ENCODE measurements at regions of chr14 and their contacts with region 1.

Region 1: GRCh38 chr14:104657101-104657524 is 32.3 kb upstream of the INF2 start:
- DNase-seq: no peak

Region 2: DNA sequence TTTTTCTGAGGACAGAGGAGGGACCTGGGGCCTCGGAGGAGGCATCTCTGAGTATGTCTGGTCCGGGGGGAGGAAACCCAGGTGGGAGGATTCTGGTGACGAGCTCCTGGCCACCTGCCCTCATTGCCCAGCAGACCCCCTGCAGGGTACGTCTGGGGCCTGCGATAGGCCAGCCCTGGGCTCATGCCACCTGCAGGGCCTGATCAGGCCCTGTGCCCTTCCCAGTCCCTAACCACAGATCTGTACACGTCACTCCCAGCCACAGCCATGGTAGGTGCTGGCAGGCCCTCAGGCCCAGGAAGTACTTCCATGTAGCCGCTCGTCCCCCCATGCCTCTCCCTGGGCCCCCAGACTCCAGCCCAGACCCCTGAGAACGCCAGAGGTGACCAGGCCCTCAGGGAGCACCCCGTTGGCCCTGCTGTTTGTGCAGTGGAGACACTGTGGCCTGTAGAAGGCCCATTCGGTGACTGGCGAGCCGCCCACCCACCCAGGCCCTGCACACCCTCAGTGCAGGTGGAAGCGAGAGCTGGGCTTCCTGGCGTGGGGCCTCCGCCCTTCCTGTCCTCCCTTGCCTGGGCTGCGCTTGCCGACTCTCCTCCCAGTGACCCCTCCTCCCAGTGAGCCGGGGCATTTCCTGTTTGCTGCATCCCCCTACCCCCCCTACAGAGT is 38.0 kb after region 1 on chr14:
- intact Hi-C with region 1: loop called (anchors 5 kb)
- DNase-seq: no peak

Region 3: DNA sequence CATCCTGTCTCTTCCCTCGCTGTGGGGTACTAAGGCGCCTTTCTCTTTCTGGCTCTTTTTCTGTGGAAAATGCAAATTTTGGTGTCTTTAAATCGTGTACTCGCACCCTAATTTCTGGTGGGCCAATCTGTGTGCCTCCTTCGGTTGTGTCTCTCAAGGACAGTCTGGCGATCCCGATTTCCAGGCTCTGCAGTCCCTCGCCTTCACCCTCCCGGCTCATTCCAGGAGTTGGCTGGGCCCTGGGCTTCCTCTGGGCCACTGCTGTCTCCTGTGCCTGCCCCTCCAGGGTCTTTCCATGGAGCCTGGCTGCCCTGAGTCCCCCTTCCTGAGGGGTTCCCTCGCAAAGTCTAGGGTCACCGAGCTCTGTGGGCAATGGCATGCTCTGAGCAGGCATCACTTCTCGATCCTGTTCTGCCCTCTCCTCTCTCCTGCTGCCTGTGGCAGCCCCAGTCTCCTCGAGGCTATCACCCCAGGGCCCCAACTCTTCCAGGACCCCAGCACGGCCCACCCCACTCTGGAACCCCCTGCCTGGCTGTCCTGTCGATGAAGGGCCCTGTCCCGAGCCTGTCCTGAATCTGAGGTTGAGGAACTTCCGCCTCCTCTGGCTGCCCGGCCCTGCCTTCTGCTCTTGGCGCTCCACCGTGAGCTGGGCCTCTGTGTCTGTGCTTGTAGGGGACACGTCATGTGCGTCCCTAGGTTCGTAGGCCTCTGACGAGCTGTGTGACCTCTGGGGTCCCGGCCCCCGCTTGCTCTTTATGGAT is 297.0 kb after region 1 on chr14:
- intact Hi-C with region 1: no loop called
- DNase-seq: no peak